ENCODE measurements at regions of chr7 and their contacts with region 1.

Region 1: DNA sequence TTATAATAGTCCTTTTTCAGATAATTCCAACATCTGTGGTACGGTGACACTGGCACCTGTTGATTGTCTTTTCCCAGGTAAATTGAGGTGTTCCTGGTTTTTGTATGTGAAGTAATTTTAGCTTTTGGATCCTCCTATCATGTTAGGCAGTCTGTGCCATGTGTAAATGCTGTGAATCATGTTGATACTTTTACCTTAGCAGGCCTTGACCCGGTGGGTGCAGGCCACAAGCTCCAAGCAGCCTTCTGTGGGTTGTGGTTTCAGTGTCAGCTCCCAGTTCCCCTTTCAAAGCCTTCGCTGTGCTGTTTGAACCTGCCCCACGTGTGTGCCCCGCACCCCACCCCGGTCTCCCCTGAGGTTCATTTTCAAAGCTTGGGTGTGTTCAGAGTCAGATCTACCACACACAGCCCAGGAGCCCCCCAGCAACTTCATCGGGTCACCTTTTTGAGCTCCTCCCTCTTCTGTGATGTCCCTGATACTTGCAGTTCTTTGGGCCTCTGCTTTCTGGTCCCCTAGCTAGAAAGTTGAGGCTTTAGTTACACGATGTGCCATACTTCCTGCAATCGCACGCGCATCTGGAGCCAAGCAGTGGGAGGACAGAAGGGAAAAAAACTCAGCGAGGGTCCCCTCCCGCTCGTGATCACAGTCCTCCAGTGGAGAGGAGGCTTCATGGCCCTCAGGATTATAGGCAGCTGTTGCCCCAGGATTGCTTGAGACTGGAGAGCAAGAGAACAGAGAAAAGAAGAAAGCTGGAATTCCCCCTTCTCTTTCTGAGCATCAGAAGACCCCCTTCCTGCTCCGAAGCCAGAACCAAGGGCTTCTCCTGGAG is 8.7 kb upstream of the BHLHA15 start:
- DNase-seq: peak; percentile 96
- H3K4me3 ChIP-seq: peak overlapping the region; percentile 58
- H3K27ac ChIP-seq: peak overlapping the region; percentile 86
- H3K4me1 ChIP-seq: peaks cover 62% of the 10 kb centered on the region
- CTCF ChIP-seq: no peak

Region 2: GRCh38 chr7:97117372-97118188 is 1085.0 kb before region 1 on chr7 and contains the start of gene SDHAF3:
- CTCF ChIA-PET with region 1: no interaction called
- POLR2A ChIA-PET with region 1: no interaction called
- intact Hi-C with region 1: loop called (anchors 5 kb)
- DNase-seq: peak; percentile 99
- H3K4me3 ChIP-seq: peak within 1 kb of the TSS; percentile 78
- H3K27ac ChIP-seq: peak within 1 kb of the TSS; percentile 76
- H3K4me1 ChIP-seq: peaks cover 28% of the 10 kb centered on the region
- CTCF ChIP-seq: peak; percentile 25; the same call in 1 of the 2 replicates
- total RNA-seq, gene SDHAF3: 9.9 and 27.9 TPM in 2 replicates

Region 3: DNA sequence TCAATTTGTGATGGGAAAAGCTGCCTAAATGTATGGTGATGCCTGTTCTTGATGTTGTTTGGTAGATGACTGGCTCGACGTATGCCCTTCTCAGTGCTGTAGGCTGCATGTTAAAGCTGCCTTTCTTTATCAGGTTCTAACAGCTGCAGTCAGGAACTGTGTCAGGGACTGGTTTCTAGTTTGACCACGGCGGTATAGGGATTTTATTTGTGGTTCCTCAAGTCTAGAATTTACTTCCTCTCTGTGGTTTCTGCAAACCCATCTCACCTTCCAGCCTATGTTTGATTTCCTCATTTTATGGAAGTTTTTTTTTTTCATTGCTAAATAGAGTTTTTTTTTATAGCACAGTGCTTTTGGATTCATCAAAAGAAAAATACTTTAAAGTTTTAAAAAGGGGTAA is 69.4 kb before region 1 on chr7:
- CTCF ChIA-PET with region 1: no interaction called
- POLR2A ChIA-PET with region 1: interaction called, 3 read pairs
- intact Hi-C with region 1: loop called (anchors 1 kb)
- DNase-seq: peak; percentile 67
- H3K4me3 ChIP-seq: no peak overlapping the region
- H3K27ac ChIP-seq: no peak overlapping the region
- H3K4me1 ChIP-seq: peaks cover 17% of the 10 kb centered on the region
- CTCF ChIP-seq: no peak

Region 4: GRCh38 chr7:98217623-98218582 is 15.3 kb after region 1 on chr7:
- CTCF ChIA-PET with region 1: no interaction called
- POLR2A ChIA-PET with region 1: no interaction called
- intact Hi-C with region 1: loop called (anchors 1 kb)
- DNase-seq: peak; percentile 49
- H3K4me3 ChIP-seq: no peak overlapping the region
- H3K27ac ChIP-seq: no peak overlapping the region
- H3K4me1 ChIP-seq: peaks cover 24% of the 10 kb centered on the region
- CTCF ChIP-seq: no peak

Region 5: DNA sequence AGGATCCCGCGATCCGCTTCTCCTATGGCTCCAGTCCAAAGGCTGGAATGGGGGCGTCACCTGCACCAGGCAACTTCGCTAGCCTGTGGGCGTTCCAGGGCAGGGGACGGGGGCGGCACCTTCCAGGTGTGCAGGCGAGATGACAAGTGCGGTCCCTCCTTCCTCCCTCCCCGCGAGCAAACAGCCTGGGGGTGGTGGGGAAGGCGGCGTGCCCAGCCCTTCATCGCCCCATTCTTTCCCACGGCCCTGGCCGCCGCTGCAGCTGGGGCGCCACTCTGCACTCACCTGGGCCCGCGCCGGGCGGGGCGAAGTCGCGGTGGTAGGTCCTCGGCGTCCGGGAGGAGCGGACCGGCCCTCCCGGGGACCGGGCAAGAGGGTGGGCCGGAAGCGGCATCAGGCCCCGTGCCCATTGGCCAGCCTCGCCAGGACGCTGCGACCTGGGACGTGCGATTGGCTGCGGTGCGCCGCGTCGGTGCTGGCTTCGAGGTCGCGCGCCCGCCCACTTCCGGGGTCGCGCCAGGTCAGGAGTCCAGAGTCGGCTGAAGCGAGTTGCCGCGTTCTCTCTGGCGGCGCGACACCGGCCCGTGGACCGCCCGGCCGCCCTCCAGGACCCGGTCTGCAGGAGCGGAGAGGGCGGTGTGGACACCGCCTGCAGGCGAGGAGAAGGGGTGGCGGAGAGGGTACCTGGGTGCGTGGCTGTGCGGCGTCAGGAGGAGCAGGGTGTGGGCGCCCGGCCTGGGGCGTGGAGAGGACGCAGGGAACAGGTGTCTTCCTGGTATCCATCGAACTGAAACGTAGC is 49.5 kb after region 1 on chr7 and contains the start of gene TECPR1:
- CTCF ChIA-PET with region 1: interaction called, 4 read pairs
- POLR2A ChIA-PET with region 1: interaction called, 5 read pairs
- intact Hi-C with region 1: loop called (anchors 1 kb)
- DNase-seq: peak; percentile 93
- H3K4me3 ChIP-seq: peak within 1 kb of the TSS; percentile 86
- H3K27ac ChIP-seq: peak within 1 kb of the TSS; percentile 83
- H3K4me1 ChIP-seq: peaks cover 32% of the 10 kb centered on the region
- CTCF ChIP-seq: no peak
- total RNA-seq, gene TECPR1: 17.9 and 23.2 TPM in 2 replicates

Region 6: GRCh38 chr7:98483276-98483965 is 280.8 kb after region 1 on chr7:
- CTCF ChIA-PET with region 1: no interaction called
- POLR2A ChIA-PET with region 1: no interaction called
- intact Hi-C with region 1: no loop called
- DNase-seq: peak; percentile 66
- H3K4me3 ChIP-seq: no peak overlapping the region
- H3K27ac ChIP-seq: no peak overlapping the region
- H3K4me1 ChIP-seq: peaks cover 8% of the 10 kb centered on the region
- CTCF ChIP-seq: 0 out of 2 replicates have a peak, but pooled peaks have one; percentile 23